GM12878 (cell line): ENCODE measurements at regions of chr10 and their contacts with region 1.

Region 1: GRCh38 chr10:120423431-120424197 is 33.4 kb upstream of the PLPP4 start:
- DNase-seq: no peak
- ATAC-seq: peak; percentile 88
- H3K4me3 ChIP-seq: no peak overlapping the region
- H3K27ac ChIP-seq: no peak overlapping the region
- H3K4me1 ChIP-seq: no peaks in the 10 kb centered on the region
- H3K27me3 ChIP-seq: peaks cover 0 to 3% of the 10 kb centered on the region in 2 experiments; a peak in 2 of 4 replicates
- CTCF ChIP-seq: peak; percentile 88 to 95 (median 91)
- EP300 ChIP-seq: no peak
- POLR2A ChIP-seq: no peak
- RAD21 ChIP-seq: peak; percentile 92

Region 2: GRCh38 chr10:120221873-120222485 is 201.6 kb before region 1 on chr10:
- CTCF ChIA-PET with region 1: interaction called, 11 read pairs
- POLR2A ChIA-PET with region 1: no interaction called
- RAD21 ChIA-PET with region 1: no interaction called
- SMC1A ChIA-PET with region 1: no interaction called
- in situ Hi-C with region 1: no loop called
- intact Hi-C with region 1: loop called (anchors 10 kb)
- DNase-seq: no peak
- ATAC-seq: peak; percentile 90
- H3K4me3 ChIP-seq: no peak overlapping the region
- H3K27ac ChIP-seq: no peak overlapping the region
- H3K4me1 ChIP-seq: no peaks in the 10 kb centered on the region
- H3K27me3 ChIP-seq: no peaks in the 10 kb centered on the region
- CTCF ChIP-seq: peak; percentile 49 to 66 (median 65)
- EP300 ChIP-seq: no peak
- POLR2A ChIP-seq: no peak
- RAD21 ChIP-seq: peak; percentile 58

Region 3: GRCh38 chr10:120607016-120607709 is 183.5 kb after region 1 on chr10:
- CTCF ChIA-PET with region 1: interaction called, 11 read pairs
- POLR2A ChIA-PET with region 1: no interaction called
- RAD21 ChIA-PET with region 1: interaction called, 5 read pairs
- SMC1A ChIA-PET with region 1: interaction called, 5 read pairs
- in situ Hi-C with region 1: no loop called
- intact Hi-C with region 1: loop called (anchors 5 kb)
- DNase-seq: no peak
- ATAC-seq: peak; percentile 9; the same call in 2 of the 3 replicates
- H3K4me3 ChIP-seq: no peak overlapping the region; the same call in 1 of the 2 replicates
- H3K27ac ChIP-seq: peak overlapping the region; percentile 43; the same call in 1 of the 2 replicates
- H3K4me1 ChIP-seq: peaks cover 27% of the 10 kb centered on the region
- H3K27me3 ChIP-seq: no peaks in the 10 kb centered on the region
- CTCF ChIP-seq: no peak
- EP300 ChIP-seq: no peak
- POLR2A ChIP-seq: no peak
- RAD21 ChIP-seq: no peak

Region 4: DNA sequence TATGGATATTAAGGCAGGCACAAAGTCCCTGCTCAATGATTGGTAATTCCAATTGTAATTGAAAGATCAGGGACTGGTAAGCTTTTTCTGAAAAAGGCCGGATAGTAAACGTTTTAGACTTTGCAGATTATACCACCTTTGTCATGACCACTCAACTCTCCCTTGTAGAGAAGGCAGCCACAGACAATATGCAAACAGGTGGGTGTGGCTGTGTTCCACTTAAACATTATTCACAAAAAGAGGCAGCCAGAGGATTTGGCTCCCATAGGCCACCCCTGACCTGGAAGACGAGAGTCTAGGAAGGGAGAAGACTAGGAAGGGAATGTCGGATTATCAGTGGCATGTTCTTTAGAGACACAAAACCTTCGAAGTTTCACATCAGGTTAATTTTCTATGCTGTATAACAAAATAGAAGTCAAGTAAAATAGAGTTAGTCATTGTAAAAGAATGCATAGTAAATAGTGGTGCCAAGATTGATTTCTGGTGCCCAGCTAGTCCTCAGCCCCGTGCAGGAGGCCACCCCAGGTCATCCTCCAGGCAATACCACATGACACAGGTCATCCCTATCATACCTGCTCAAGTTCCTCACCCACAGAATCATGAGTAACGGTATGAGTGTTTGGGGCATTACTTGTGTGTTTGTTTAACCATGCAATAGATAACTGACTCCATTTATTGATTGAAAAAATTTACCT is 227.2 kb after region 1 on chr10:
- CTCF ChIA-PET with region 1: interaction called, 13 read pairs
- POLR2A ChIA-PET with region 1: no interaction called
- RAD21 ChIA-PET with region 1: interaction called, 4 read pairs
- SMC1A ChIA-PET with region 1: interaction called, 4 read pairs
- in situ Hi-C with region 1: no loop called
- intact Hi-C with region 1: no loop called
- DNase-seq: no peak
- ATAC-seq: no peak
- H3K4me3 ChIP-seq: no peak overlapping the region
- H3K27ac ChIP-seq: no peak overlapping the region
- H3K4me1 ChIP-seq: no peaks in the 10 kb centered on the region
- H3K27me3 ChIP-seq: no peaks in the 10 kb centered on the region
- CTCF ChIP-seq: no peak
- EP300 ChIP-seq: no peak
- POLR2A ChIP-seq: no peak
- RAD21 ChIP-seq: no peak

Region 5: DNA sequence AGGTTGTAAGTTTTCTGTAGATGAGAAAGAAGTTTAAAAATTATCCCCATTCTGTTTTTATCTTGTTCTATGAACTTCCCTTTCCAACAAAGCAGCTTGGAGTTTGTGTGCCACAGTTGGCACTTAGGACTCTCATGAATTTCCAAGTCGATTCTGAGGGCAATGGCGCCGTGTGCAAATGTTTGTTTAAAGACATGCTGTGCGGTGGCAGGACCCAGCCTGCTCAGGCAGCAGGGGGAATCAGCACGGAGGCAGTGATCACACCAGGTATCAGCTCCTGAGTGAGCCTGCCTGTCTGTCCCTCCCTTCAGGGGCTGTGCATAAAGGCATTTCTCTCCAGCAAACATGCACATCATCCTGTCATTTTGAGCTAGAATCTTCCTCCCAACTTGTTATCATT is 317.8 kb after region 1 on chr10:
- CTCF ChIA-PET with region 1: interaction called, 64 read pairs
- POLR2A ChIA-PET with region 1: no interaction called
- RAD21 ChIA-PET with region 1: interaction called, 34 read pairs
- SMC1A ChIA-PET with region 1: interaction called, 14 read pairs
- in situ Hi-C with region 1: loop called (anchors 5 kb)
- intact Hi-C with region 1: no loop called
- DNase-seq: no peak
- ATAC-seq: no peak
- H3K4me3 ChIP-seq: no peak overlapping the region
- H3K27ac ChIP-seq: no peak overlapping the region
- H3K4me1 ChIP-seq: no peaks in the 10 kb centered on the region
- H3K27me3 ChIP-seq: no peaks in the 10 kb centered on the region
- CTCF ChIP-seq: no peak
- EP300 ChIP-seq: no peak
- POLR2A ChIP-seq: no peak
- RAD21 ChIP-seq: no peak